ENCODE measurements at regions of chr9 and their contacts with region 1.

Region 1: DNA sequence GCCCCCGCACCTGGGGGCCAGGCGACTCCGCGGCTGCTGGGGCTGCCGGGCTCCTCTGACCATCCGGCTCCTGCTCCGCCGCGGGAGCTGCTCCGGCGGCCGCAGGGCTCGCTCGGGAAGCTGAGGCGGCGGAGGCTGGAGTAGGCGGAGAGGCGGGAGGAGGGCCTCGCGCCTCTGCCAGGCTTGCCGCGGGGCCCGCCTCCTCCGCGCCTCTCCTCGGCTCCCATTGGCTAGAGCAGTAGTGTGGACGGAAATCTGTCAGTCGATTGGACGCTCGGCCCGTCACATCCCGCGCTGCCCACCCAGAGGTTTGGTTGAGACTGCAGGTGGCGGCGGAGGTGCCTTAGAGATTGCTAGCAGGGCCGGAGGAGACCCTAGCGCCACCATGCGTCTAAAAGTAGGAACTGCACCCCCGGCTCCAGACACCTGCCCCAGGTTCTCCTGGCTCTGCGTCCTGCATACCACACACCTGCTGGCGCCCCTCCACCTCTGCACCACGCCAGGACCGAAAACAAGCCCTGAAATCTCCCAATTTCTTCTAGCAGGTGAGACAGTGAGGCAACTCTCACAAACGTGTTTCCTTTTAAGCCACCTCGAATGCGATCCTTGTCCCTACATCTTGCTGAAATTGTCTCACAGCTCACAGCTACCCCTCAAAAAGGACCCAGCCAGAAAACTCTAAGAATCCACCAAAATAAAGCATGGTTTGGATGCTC is at the start of gene SCAI:
- DNase-seq: peak; percentile 97 to 98 (median 97)
- H3K4me3 ChIP-seq: peak within 1 kb of the TSS; percentile 25 to 72 (median 46)
- H3K4me3 Mint-ChIP-seq: peak within 1 kb of the TSS; percentile 93 to 98
- H3K27ac ChIP-seq: no peak within 1 kb of the TSS
- H3K27ac Mint-ChIP-seq: peak within 1 kb of the TSS in 4 of 7 donors; percentile 20 to 90 (median 76)
- H3K4me1 ChIP-seq: peaks cover 12 to 14% of the 10 kb centered on the region in 2 donors
- H3K4me1 Mint-ChIP-seq: peaks cover 19% of the 10 kb centered on the region
- H3K27me3 ChIP-seq: no peaks in the 10 kb centered on the region
- H3K27me3 Mint-ChIP-seq: peaks cover 0 to 3% (median 1%) of the 10 kb centered on the region in 3 donors
- CTCF ChIP-seq: peak; percentile 98
- polyA plus RNA-seq, gene SCAI: 0.76 to 1.4 (median 0.84) TPM

Region 2: DNA sequence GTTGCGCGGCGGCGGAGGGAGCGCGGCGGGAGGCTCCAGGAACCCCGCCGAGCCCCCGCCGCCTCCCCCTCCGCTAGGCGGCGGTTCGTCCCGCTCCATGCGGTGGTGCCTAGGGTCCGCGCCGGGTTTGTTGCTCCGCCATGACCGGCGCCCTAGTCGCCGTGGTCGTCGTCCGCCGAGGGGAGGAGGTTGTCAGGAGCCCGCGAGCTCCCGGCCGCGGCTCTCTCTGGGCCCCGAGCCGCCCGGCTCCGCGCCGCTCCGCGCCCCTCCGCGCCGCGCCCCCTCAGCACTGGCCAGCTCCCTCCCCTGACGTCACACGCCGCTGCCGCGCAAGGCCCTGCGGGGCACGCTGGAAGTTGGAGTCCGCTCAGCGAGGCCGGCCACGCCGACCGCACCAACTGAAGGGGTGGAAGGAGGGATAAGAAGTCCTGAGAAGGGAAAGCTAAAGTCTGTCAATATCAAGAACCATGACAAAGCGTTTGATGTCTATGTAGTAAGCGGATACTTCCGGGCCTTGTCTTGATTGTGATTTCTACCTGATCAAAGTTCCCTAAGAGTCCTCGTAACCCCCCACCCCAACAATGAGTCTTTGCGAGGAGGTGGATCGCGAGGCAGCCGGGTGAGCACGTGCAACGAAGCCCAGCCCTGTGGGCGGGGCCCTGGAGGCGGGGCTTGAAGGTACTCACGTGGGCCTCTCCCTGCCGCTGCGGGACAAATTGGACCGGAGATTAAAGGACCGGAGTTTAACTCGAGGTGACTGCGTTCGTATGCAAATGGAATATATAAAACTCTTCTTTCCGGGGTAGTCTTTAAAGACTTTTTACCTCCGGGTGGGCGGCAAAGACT is 372.3 kb before region 1 on chr9 and contains the start of gene NR6A1:
- intact Hi-C with region 1: loop called (anchors 5 to 10 kb)
- DNase-seq: peak; percentile 92 to 94 (median 93)
- H3K4me3 ChIP-seq: peak within 1 kb of the TSS; percentile 74 to 97 (median 95)
- H3K4me3 Mint-ChIP-seq: peak within 1 kb of the TSS; percentile 96 to 99
- H3K27ac ChIP-seq: peak within 1 kb of the TSS; percentile 46 to 91
- H3K27ac Mint-ChIP-seq: peak within 1 kb of the TSS; percentile 92 to 98 (median 97)
- H3K4me1 ChIP-seq: peaks cover 43 to 73% of the 10 kb centered on the region in 2 donors
- H3K4me1 Mint-ChIP-seq: peaks cover 70% of the 10 kb centered on the region
- H3K27me3 ChIP-seq: peaks cover 0 to 16% of the 10 kb centered on the region in 2 donors
- H3K27me3 Mint-ChIP-seq: peaks cover 17 to 31% (median 24%) of the 10 kb centered on the region in 3 donors
- CTCF ChIP-seq: no peak
- polyA plus RNA-seq, gene NR6A1: 0.15 to 2.9 (median 0.28) TPM

Region 3: GRCh38 chr9:124861342-124862229 is 281.9 kb before region 1 on chr9 and contains the starts of genes ARPC5L and RPL35:
- intact Hi-C with region 1: loop called in 1 of 2 experiments (anchors 10 kb)
- DNase-seq: peak; percentile 91 to 93 (median 92)
- H3K4me3 ChIP-seq: peak within 1 kb of the TSS; percentile 79 to 90 (median 83)
- H3K4me3 Mint-ChIP-seq: peak within 1 kb of the TSS; percentile 90 to 96
- H3K27ac ChIP-seq: peak within 1 kb of the TSS; percentile 90 to 91
- H3K27ac Mint-ChIP-seq: peak within 1 kb of the TSS; percentile 85 to 96 (median 94)
- H3K4me1 ChIP-seq: peaks cover 26 to 30% of the 10 kb centered on the region in 2 donors
- H3K4me1 Mint-ChIP-seq: peaks cover 34% of the 10 kb centered on the region
- H3K27me3 ChIP-seq: no peaks in the 10 kb centered on the region
- H3K27me3 Mint-ChIP-seq: peaks cover 0 to 2% (median 0%) of the 10 kb centered on the region in 3 donors
- CTCF ChIP-seq: peak; percentile 55
- polyA plus RNA-seq, gene ARPC5L: 16.0 to 35.2 (median 20.7) TPM
- polyA plus RNA-seq, gene RPL35: 660 to 1,209 (median 828) TPM

Region 4: GRCh38 chr9:124940693-124941453 is 202.7 kb before region 1 on chr9 and contains the start of gene GOLGA1:
- intact Hi-C with region 1: loop called (anchors 2 to 5 kb)
- DNase-seq: peak; percentile 94 to 96 (median 96)
- H3K4me3 ChIP-seq: peak within 1 kb of the TSS; percentile 86 to 94 (median 88)
- H3K4me3 Mint-ChIP-seq: peak within 1 kb of the TSS; percentile 94 to 99
- H3K27ac ChIP-seq: peak within 1 kb of the TSS; percentile 90 to 99
- H3K27ac Mint-ChIP-seq: peak within 1 kb of the TSS; percentile 95 to 99 (median 99)
- H3K4me1 ChIP-seq: peaks cover 14 to 16% of the 10 kb centered on the region in 2 donors
- H3K4me1 Mint-ChIP-seq: peaks cover 28% of the 10 kb centered on the region
- H3K27me3 ChIP-seq: no peaks in the 10 kb centered on the region
- H3K27me3 Mint-ChIP-seq: no peaks in the 10 kb centered on the region
- CTCF ChIP-seq: no peak
- polyA plus RNA-seq, gene GOLGA1: 3.1 to 15.7 (median 8.0) TPM

Region 5: DNA sequence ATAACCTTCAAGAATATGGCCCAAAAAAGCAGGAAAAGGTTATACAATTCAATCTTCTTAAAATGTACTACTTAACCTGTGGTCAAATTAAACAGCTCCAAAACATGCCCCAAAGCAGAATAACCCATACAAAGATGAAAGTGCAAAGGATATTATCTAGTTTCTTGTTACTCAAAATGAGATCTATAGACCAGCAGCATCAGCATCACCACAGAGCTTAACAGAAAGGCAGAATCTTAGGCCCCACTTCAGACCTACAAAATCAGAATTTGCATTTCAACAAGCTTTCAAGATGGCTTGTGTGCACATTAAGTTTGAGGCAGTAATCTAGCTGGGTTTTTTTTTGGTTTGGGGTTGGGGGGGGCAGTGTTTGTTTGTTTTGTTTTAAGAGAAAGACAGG is 54.2 kb before region 1 on chr9:
- intact Hi-C with region 1: no loop called
- DNase-seq: no peak
- H3K4me3 ChIP-seq: no peak overlapping the region
- H3K4me3 Mint-ChIP-seq: no peak overlapping the region
- H3K27ac ChIP-seq: no peak overlapping the region
- H3K27ac Mint-ChIP-seq: no peak overlapping the region
- H3K4me1 ChIP-seq: no peaks in the 10 kb centered on the region
- H3K4me1 Mint-ChIP-seq: peaks cover 17% of the 10 kb centered on the region
- H3K27me3 ChIP-seq: no peaks in the 10 kb centered on the region
- H3K27me3 Mint-ChIP-seq: peaks cover 0 to 2% (median 1%) of the 10 kb centered on the region in 3 donors
- CTCF ChIP-seq: no peak